HAP-1 (cell line): ENCODE measurements at regions of chr13 and their contacts with region 1.

Region 1: DNA sequence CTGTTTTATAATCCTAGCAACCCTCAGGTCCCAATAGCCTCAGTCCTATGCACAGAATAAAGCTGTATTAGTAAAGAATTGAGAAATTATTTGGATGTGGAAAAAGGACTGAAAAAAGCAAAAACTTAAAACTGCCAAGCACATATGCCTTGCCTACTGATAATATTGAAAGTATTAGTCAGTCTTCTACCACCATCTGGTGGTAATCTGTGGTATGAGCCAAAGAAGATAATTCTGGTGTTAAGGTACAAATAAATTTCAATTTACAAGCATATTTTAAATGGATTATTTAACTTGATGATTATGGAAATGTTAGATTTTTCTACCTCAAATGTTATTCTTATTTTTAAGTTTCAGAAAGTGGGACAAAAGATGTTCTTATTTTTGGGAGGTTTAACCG is 460.3 kb upstream of the KLHL1 start:
- DNase-seq: peak; percentile 38 to 54
- H3K4me3 ChIP-seq: no peak overlapping the region
- H3K4me1 ChIP-seq: peaks cover 3% of the 10 kb centered on the region; the same call in 1 of the 2 replicates
- H3K27me3 ChIP-seq: no peaks in the 10 kb centered on the region

Region 2: DNA sequence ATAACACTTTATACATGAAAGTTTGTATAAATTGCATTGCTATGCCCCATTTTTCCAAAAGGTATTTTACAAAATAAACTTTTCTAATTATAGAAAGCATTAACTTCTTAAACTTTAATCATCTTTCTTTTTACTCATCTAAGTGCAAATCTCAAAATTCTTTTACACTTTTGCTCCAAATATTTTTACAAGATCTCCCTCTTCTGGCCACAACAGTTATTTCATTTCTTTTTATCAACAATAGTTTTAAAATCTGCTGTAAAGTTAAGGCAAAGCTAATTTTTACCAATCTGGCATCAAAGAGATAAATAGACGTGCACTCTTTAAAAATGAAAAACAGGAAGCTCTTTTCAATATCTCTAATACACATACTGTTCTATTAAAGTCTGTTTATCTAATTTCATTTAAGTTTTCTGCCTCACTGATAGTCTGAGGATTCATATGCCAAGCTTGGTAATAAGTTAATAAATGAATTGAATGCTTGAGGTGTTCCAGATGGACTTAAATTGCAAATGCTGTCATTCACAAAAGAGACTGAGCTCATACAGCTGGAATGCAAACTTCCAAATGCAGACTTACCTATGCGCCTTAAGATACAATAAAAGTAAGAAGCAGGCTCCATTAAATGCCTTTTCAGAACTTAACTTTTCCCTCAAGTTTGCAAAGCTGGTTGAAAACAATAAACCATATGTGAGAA is 1044.0 kb before region 1 on chr13:
- in situ Hi-C with region 1: loop called (anchors 25 kb)
- DNase-seq: peak in 1 of 2 experiments; percentile 35
- H3K4me3 ChIP-seq: no peak overlapping the region
- H3K4me1 ChIP-seq: peaks cover 3% of the 10 kb centered on the region; the same call in 1 of the 2 replicates
- H3K27me3 ChIP-seq: no peaks in the 10 kb centered on the region

Region 3: GRCh38 chr13:69857183-69857821 is 711.3 kb before region 1 on chr13:
- in situ Hi-C with region 1: loop called (anchors 25 kb)
- DNase-seq: peak in 1 of 2 experiments; percentile 71
- H3K4me3 ChIP-seq: no peak overlapping the region
- H3K4me1 ChIP-seq: peaks cover 5% of the 10 kb centered on the region
- H3K27me3 ChIP-seq: no peaks in the 10 kb centered on the region

Region 4: DNA sequence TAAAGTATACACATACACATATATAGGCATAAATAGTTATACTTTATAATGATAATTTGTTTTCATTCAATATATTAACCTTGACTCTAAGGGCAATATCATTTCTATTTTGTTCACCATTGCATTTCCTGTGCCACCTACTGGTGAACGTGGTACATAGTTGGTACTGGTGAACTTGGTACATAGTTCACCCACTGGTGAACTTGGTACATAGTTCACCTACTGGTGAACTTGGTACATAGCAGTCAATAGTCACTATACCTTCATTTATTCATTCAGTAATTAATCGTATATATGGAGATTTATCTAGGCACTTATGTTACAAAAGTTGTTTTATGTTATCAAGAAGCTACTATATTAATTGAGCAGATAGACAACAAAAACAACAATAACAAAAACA is 633.5 kb before region 1 on chr13:
- in situ Hi-C with region 1: loop called (anchors 25 kb)
- DNase-seq: peak; percentile 40 to 67
- H3K4me3 ChIP-seq: no peak overlapping the region
- H3K4me1 ChIP-seq: no peaks in the 10 kb centered on the region
- H3K27me3 ChIP-seq: no peaks in the 10 kb centered on the region